B cell (primary cell): ENCODE measurements at regions of chrX and their contacts with region 1.

Region 1: GRCh38 chrX:71652405-71652804 is 14.9 kb upstream of the LOC101059915 start:
- DNase-seq: peak; percentile 64
- ATAC-seq: peak; percentile 69
- H3K4me3 ChIP-seq: no peak overlapping the region
- H3K4me3 Mint-ChIP-seq: no peak overlapping the region
- H3K27ac ChIP-seq: no peak overlapping the region
- H3K27ac Mint-ChIP-seq: peak overlapping the region; percentile 34
- H3K4me1 ChIP-seq: peaks cover 0 to 5% of the 10 kb centered on the region in 2 donors
- H3K4me1 Mint-ChIP-seq: peaks cover 10% of the 10 kb centered on the region
- H3K27me3 ChIP-seq: no peaks in the 10 kb centered on the region
- H3K27me3 Mint-ChIP-seq: no peaks in the 10 kb centered on the region
- CTCF ChIP-seq: peak; percentile 66

Region 2: DNA sequence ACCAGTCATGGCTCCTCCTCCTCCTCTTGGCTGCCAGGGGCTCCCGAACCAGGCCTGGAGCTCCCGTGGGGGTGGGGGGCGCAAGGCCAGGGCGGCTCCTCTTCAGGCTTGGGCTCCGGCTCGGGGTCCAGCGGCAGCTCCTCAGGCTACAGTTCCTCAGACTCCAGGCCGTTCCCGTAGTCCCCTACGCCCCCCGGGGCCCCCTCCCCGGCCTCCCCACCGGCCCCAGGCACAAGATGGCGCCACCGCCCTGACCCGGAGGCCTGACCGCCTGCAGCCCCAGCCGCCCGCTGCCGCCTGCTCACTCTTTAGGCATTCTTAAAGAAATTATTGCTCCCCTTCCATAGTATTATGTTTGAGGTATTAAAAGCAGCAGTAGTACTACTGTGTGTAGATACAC is 231.7 kb before region 1 on chrX:
- CTCF ChIA-PET with region 1: interaction called, 4 read pairs
- POLR2A ChIA-PET with region 1: no interaction called
- intact Hi-C with region 1: loop called (anchors 5 kb)
- DNase-seq: no peak
- ATAC-seq: no peak
- H3K4me3 ChIP-seq: no peak overlapping the region
- H3K4me3 Mint-ChIP-seq: no peak overlapping the region
- H3K27ac ChIP-seq: no peak overlapping the region
- H3K27ac Mint-ChIP-seq: no peak overlapping the region
- H3K4me1 ChIP-seq: no peaks in the 10 kb centered on the region
- H3K4me1 Mint-ChIP-seq: no peaks in the 10 kb centered on the region
- H3K27me3 ChIP-seq: no peaks in the 10 kb centered on the region
- H3K27me3 Mint-ChIP-seq: no peaks in the 10 kb centered on the region
- CTCF ChIP-seq: no peak

Region 3: GRCh38 chrX:71475785-71476540 is 176.4 kb before region 1 on chrX:
- CTCF ChIA-PET with region 1: no interaction called
- POLR2A ChIA-PET with region 1: no interaction called
- intact Hi-C with region 1: no loop called
- DNase-seq: no peak
- ATAC-seq: no peak
- H3K4me3 ChIP-seq: no peak overlapping the region
- H3K4me3 Mint-ChIP-seq: no peak overlapping the region
- H3K27ac ChIP-seq: no peak overlapping the region
- H3K27ac Mint-ChIP-seq: no peak overlapping the region
- H3K4me1 ChIP-seq: no peaks in the 10 kb centered on the region
- H3K4me1 Mint-ChIP-seq: peaks cover 2% of the 10 kb centered on the region
- H3K27me3 ChIP-seq: no peaks in the 10 kb centered on the region
- H3K27me3 Mint-ChIP-seq: no peaks in the 10 kb centered on the region
- CTCF ChIP-seq: no peak

Region 4: GRCh38 chrX:71525316-71525715 is 127.1 kb before region 1 on chrX:
- CTCF ChIA-PET with region 1: no interaction called
- POLR2A ChIA-PET with region 1: no interaction called
- intact Hi-C with region 1: no loop called
- DNase-seq: no peak
- ATAC-seq: no peak
- H3K4me3 ChIP-seq: no peak overlapping the region
- H3K4me3 Mint-ChIP-seq: no peak overlapping the region
- H3K27ac ChIP-seq: no peak overlapping the region
- H3K27ac Mint-ChIP-seq: no peak overlapping the region
- H3K4me1 ChIP-seq: no peaks in the 10 kb centered on the region
- H3K4me1 Mint-ChIP-seq: no peaks in the 10 kb centered on the region
- H3K27me3 ChIP-seq: no peaks in the 10 kb centered on the region
- H3K27me3 Mint-ChIP-seq: no peaks in the 10 kb centered on the region
- CTCF ChIP-seq: no peak

Region 5: GRCh38 chrX:71609095-71609750 is 43.2 kb before region 1 on chrX:
- CTCF ChIA-PET with region 1: interaction called, 7 read pairs
- POLR2A ChIA-PET with region 1: interaction called, 3 read pairs
- intact Hi-C with region 1: loop called (anchors 1 kb)
- DNase-seq: no peak
- ATAC-seq: no peak
- H3K4me3 ChIP-seq: no peak overlapping the region
- H3K4me3 Mint-ChIP-seq: no peak overlapping the region
- H3K27ac ChIP-seq: no peak overlapping the region
- H3K27ac Mint-ChIP-seq: peak overlapping the region; percentile 50
- H3K4me1 ChIP-seq: peaks cover 15 to 19% of the 10 kb centered on the region in 2 donors
- H3K4me1 Mint-ChIP-seq: peaks cover 23% of the 10 kb centered on the region
- H3K27me3 ChIP-seq: no peaks in the 10 kb centered on the region
- H3K27me3 Mint-ChIP-seq: no peaks in the 10 kb centered on the region
- CTCF ChIP-seq: no peak

Region 6: DNA sequence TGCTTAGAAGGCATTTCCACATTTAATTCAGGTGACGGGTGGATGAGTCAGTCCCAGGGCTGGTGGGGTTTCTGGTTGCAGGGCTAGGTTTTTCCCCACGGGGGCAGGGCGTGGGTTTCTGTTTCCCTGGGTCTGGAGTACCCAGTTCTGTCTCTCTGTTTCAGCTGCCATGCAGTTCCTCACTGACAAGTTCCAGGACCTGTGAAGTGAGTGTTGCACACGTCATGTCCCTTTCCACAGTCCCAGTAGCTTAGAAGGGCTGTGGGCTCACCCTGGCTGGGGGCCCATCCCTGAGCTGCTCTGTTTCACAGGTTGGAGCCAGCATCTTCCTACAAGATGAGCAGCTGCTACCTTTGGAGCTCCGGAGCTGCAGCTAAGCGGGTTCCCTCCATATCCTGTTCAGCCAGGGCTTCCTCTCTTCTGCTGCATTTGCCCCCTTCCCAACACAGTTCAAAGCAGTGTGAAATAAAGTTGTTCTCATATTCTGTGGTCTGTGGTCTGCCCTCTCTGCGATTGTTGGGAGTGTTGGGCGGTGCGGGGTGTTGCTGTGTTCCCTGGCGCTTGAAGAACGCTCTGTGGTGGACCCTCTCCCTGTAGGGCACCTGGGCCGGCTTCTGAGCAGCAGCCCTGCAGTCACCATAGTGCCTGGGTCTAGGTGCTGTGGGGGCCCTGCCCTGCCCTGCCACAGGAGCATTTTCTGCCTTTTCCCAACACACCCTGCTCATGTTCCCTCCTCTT is 18.8 kb after region 1 on chrX:
- CTCF ChIA-PET with region 1: no interaction called
- POLR2A ChIA-PET with region 1: no interaction called
- intact Hi-C with region 1: no loop called
- DNase-seq: no peak
- ATAC-seq: no peak
- H3K4me3 ChIP-seq: no peak overlapping the region
- H3K4me3 Mint-ChIP-seq: no peak overlapping the region
- H3K27ac ChIP-seq: no peak overlapping the region
- H3K27ac Mint-ChIP-seq: no peak overlapping the region
- H3K4me1 ChIP-seq: no peaks in the 10 kb centered on the region
- H3K4me1 Mint-ChIP-seq: no peaks in the 10 kb centered on the region
- H3K27me3 ChIP-seq: no peaks in the 10 kb centered on the region
- H3K27me3 Mint-ChIP-seq: peaks cover 18% of the 10 kb centered on the region
- CTCF ChIP-seq: no peak